Dendritic cell treated with granulocyte-macrophage colony-stimulating factor and Interleukin-4, amounts not matched to agents 40 ng/mL and 50 ng/mL, for 4 days (primary cell): ENCODE measurements at regions of chr7 and their contacts with region 1.

Region 1: DNA sequence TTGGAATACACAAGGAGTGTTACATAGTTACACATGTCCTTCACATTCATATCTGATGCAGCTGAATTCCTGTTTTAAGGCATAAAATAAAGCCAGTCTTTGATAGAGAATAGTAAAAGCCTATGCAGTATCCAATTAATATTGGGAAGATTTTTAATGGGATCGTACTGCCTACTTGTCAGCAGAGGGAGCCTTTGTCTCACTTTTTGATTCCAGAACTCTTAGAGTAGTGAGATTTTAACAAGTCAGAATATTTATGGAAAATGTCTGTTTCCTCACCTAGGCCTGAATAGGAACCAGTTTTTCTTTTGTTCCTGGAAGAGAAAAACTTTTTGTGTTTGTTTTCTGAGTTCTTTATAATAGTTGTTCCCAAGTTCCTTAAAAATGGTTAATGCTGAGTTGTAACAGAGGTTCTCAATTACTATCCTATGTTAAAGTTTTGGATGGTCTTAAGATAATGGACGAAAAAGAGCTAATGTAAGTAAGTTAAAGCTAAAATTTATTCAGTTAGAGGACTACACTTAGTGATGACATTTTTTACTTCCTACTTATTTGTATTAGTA is 114.0 kb downstream of the BBS9 start:
- H3K4me3 Mint-ChIP-seq: no peak overlapping the region
- H3K27ac Mint-ChIP-seq: no peak overlapping the region
- H3K4me1 Mint-ChIP-seq: no peaks in the 10 kb centered on the region
- H3K27me3 Mint-ChIP-seq: no peaks in the 10 kb centered on the region

Region 2: GRCh38 chr7:33262476-33262875 is 19.1 kb after region 1 on chr7:
- intact Hi-C with region 1: no loop called
- H3K4me3 Mint-ChIP-seq: no peak overlapping the region
- H3K27ac Mint-ChIP-seq: no peak overlapping the region
- H3K4me1 Mint-ChIP-seq: no peaks in the 10 kb centered on the region
- H3K27me3 Mint-ChIP-seq: no peaks in the 10 kb centered on the region

Region 3: GRCh38 chr7:33757562-33758165 is 514.3 kb after region 1 on chr7:
- intact Hi-C with region 1: loop called (anchors 10 kb)
- H3K4me3 Mint-ChIP-seq: no peak overlapping the region
- H3K27ac Mint-ChIP-seq: no peak overlapping the region
- H3K4me1 Mint-ChIP-seq: no peaks in the 10 kb centered on the region
- H3K27me3 Mint-ChIP-seq: no peaks in the 10 kb centered on the region

Region 4: DNA sequence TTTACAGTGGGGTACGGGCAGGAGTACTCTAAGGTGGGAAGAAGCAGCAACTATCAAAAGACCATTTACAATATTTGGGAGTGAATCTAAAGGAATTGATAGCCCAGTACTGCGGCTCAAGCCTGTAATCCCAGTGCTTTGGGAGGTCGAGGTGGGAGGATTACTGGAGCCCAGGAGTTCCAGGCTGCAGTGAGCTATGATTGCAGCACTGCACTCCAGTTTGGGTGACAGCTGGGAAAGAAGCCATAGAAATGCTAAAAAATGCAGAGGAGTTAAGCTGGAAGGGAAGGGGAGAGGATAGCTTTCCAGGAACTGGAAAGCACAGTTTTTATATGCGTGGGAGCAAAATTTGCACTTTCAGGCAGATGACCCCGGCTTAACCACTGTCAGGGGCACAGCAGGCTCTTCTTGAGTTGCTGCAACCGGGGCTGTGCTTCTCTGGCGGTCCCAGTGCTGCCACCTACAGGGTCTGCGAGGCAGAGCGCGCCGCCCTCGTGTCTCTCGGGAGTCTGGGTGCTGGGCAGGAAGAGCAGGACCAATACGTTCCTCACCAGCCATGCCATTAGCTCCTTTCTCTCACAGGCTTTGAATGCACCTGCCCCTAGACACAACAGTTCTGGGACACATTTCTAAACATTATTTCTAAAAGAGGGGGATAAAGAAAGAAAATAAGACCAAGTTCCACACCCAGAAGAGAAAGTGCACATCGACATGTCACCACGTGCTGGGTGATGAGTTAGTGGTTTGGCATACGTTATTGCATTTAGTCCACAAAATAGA is 651.8 kb after region 1 on chr7:
- intact Hi-C with region 1: loop called (anchors 10 kb)
- H3K4me3 Mint-ChIP-seq: no peak overlapping the region
- H3K27ac Mint-ChIP-seq: no peak overlapping the region
- H3K4me1 Mint-ChIP-seq: peaks cover 8% of the 10 kb centered on the region
- H3K27me3 Mint-ChIP-seq: peaks cover 12% of the 10 kb centered on the region

Region 5: GRCh38 chr7:33932832-33933468 is 689.5 kb after region 1 on chr7:
- intact Hi-C with region 1: loop called (anchors 5 kb)
- H3K4me3 Mint-ChIP-seq: no peak overlapping the region
- H3K27ac Mint-ChIP-seq: no peak overlapping the region
- H3K4me1 Mint-ChIP-seq: no peaks in the 10 kb centered on the region
- H3K27me3 Mint-ChIP-seq: peaks cover 1% of the 10 kb centered on the region